ENCODE measurements at regions of chr2 and their contacts with region 1.

Region 1: GRCh38 chr2:164061129-164061746 is 325.4 kb upstream of the FIGN start:
- DNase-seq: peak in 1 of 2 experiments; percentile 55
- H3K4me3 ChIP-seq: no peak overlapping the region
- H3K4me3 Mint-ChIP-seq: no peak overlapping the region
- H3K27ac Mint-ChIP-seq: no peak overlapping the region
- H3K4me1 ChIP-seq: no peaks in the 10 kb centered on the region
- H3K4me1 Mint-ChIP-seq: no peaks in the 10 kb centered on the region
- H3K27me3 ChIP-seq: no peaks in the 10 kb centered on the region
- H3K27me3 Mint-ChIP-seq: peaks cover 5% of the 10 kb centered on the region
- CTCF ChIP-seq: peak; percentile 64 to 66

Region 2: GRCh38 chr2:163182764-163183354 is 878.4 kb before region 1 on chr2:
- CTCF ChIA-PET with region 1: no interaction called
- POLR2A ChIA-PET with region 1: no interaction called
- intact Hi-C with region 1: loop called (anchors 5 kb)
- DNase-seq: no peak
- H3K4me3 ChIP-seq: no peak overlapping the region
- H3K4me3 Mint-ChIP-seq: no peak overlapping the region
- H3K27ac Mint-ChIP-seq: no peak overlapping the region
- H3K4me1 ChIP-seq: no peaks in the 10 kb centered on the region
- H3K4me1 Mint-ChIP-seq: no peaks in the 10 kb centered on the region
- H3K27me3 ChIP-seq: no peaks in the 10 kb centered on the region
- H3K27me3 Mint-ChIP-seq: no peaks in the 10 kb centered on the region
- CTCF ChIP-seq: peak; percentile 50 to 59

Region 3: GRCh38 chr2:163471947-163472346 is 589.3 kb before region 1 on chr2:
- CTCF ChIA-PET with region 1: no interaction called
- POLR2A ChIA-PET with region 1: no interaction called
- intact Hi-C with region 1: loop called (anchors 5 kb)
- DNase-seq: peak in 1 of 2 experiments; percentile 7
- H3K4me3 ChIP-seq: no peak overlapping the region
- H3K4me3 Mint-ChIP-seq: no peak overlapping the region
- H3K27ac Mint-ChIP-seq: no peak overlapping the region
- H3K4me1 ChIP-seq: no peaks in the 10 kb centered on the region
- H3K4me1 Mint-ChIP-seq: no peaks in the 10 kb centered on the region
- H3K27me3 ChIP-seq: no peaks in the 10 kb centered on the region
- H3K27me3 Mint-ChIP-seq: peaks cover 5% of the 10 kb centered on the region
- CTCF ChIP-seq: peak in 1 of 2 experiments; percentile 22

Region 4: DNA sequence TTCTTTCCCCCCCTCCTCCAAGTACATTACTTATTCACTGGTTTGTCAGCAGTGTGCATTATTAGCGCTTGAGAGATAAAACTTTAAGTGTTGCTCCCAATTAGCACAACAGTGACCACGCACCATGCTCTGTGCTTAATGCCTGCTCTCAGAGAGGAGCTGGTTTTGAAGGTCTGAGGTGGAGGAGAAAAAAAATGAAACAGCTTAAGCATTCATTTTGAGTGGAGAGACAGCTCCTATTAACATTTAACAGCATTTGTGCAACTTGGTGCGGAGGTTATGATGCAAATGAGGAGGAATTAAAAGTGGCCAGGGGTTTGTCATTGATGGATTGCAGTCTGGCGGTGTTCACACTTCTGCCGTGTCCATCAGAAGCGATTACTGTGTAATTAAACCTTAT is 467.3 kb before region 1 on chr2:
- CTCF ChIA-PET with region 1: no interaction called
- POLR2A ChIA-PET with region 1: no interaction called
- intact Hi-C with region 1: loop called (anchors 5 kb)
- DNase-seq: no peak
- H3K4me3 ChIP-seq: no peak overlapping the region
- H3K4me3 Mint-ChIP-seq: no peak overlapping the region
- H3K27ac Mint-ChIP-seq: no peak overlapping the region
- H3K4me1 ChIP-seq: no peaks in the 10 kb centered on the region
- H3K4me1 Mint-ChIP-seq: no peaks in the 10 kb centered on the region
- H3K27me3 ChIP-seq: no peaks in the 10 kb centered on the region
- H3K27me3 Mint-ChIP-seq: no peaks in the 10 kb centered on the region
- CTCF ChIP-seq: no peak

Region 5: GRCh38 chr2:163667064-163667887 is 394.0 kb before region 1 on chr2:
- CTCF ChIA-PET with region 1: no interaction called
- POLR2A ChIA-PET with region 1: no interaction called
- intact Hi-C with region 1: loop called (anchors 10 kb)
- DNase-seq: peak in 1 of 2 experiments; percentile 50
- H3K4me3 ChIP-seq: no peak overlapping the region
- H3K4me3 Mint-ChIP-seq: peak overlapping the region; percentile 4
- H3K27ac Mint-ChIP-seq: peak overlapping the region; percentile 1
- H3K4me1 ChIP-seq: peaks cover 25% of the 10 kb centered on the region
- H3K4me1 Mint-ChIP-seq: peaks cover 25% of the 10 kb centered on the region
- H3K27me3 ChIP-seq: no peaks in the 10 kb centered on the region
- H3K27me3 Mint-ChIP-seq: no peaks in the 10 kb centered on the region
- CTCF ChIP-seq: no peak

Region 6: GRCh38 chr2:163748420-163749166 is 312.6 kb before region 1 on chr2:
- CTCF ChIA-PET with region 1: no interaction called
- POLR2A ChIA-PET with region 1: no interaction called
- intact Hi-C with region 1: loop called (anchors 10 kb)
- DNase-seq: no peak
- H3K4me3 ChIP-seq: no peak overlapping the region
- H3K4me3 Mint-ChIP-seq: no peak overlapping the region
- H3K27ac Mint-ChIP-seq: no peak overlapping the region
- H3K4me1 ChIP-seq: no peaks in the 10 kb centered on the region
- H3K4me1 Mint-ChIP-seq: peaks cover 3% of the 10 kb centered on the region
- H3K27me3 ChIP-seq: no peaks in the 10 kb centered on the region
- H3K27me3 Mint-ChIP-seq: no peaks in the 10 kb centered on the region
- CTCF ChIP-seq: no peak